AG04449 (cell line): ENCODE measurements at regions of chr22 and their contacts with region 1.

Region 1: DNA sequence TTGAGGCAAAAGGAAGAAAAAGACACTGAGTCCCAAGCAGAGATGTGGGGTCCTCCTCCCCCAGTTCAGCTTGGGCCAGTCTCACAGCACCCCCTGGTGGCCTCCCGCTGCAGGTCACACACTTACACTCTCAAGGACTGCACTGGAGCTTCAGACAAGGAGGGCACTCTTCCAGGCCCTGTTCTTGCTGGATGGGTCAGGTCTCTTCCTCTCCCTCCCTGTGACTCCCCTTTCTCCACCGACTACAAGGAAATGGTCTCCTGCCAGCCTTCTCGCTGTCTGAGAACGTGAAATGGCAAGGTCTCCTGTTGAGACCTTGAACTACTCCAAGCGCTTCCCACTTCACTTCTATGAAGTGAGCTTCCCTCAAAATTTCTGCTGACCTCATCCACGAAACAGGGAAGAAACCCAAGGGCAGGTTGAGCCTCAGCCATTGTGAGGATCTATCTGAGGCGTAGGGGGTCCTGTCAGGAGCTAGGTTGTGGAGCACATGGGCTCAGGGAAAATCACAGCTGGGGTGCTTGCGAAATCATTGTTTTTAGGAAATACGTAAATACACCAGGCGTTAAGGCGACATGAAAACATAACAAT is 11.2 kb upstream of the IGLL1 start:
- DNase-seq: no peak
- H3K4me3 ChIP-seq: no peak overlapping the region
- CTCF ChIP-seq: peak; percentile 92

Region 2: GRCh38 chr22:23539135-23539838 is 52.0 kb before region 1 on chr22:
- CTCF ChIA-PET with region 1: interaction called, 15 read pairs
- POLR2A ChIA-PET with region 1: no interaction called
- DNase-seq: peak; percentile 10
- H3K4me3 ChIP-seq: peak overlapping the region; percentile 27
- CTCF ChIP-seq: peak; percentile 79

Region 3: DNA sequence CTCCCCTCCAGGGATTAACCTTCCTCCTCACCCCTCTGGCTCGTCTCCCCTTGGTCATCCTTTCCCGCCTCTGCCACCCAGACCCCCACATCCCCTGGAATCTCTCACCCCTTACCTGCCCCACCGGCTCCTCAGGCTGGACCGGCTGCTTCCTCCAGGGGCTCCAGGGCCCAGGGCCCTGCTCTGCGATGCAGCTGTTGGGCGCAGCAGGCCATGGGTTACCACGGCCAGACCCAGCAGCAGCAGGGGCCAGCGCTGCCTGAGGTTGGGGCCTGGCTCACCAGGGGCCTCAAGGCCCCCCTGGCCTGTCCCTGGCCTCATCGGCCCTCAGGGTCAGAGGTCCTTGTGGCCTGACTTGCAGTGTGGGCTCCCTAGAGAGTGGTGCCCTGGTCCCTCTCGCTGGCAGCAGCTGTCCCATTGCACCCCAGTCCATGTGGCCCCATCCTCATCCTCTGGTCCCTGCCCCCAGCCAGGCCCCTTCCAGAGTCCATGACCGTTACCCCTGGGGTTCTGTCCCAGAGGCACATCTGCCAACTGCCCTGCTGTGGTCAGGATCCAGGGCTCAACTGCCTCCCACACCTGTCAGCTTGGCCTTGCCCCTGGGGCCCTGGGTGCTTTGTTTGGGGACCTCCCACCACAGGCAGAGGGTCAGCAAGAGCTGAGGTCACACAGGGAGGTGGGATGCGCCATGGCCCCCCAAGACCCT is 11.3 kb before region 1 on chr22 and contains the start of gene IGLL1:
- CTCF ChIA-PET with region 1: interaction called, 17 read pairs
- POLR2A ChIA-PET with region 1: no interaction called
- DNase-seq: no peak
- H3K4me3 ChIP-seq: no peak within 1 kb of the TSS
- CTCF ChIP-seq: no peak

Region 4: GRCh38 chr22:23604939-23605712 is 13.8 kb after region 1 on chr22:
- CTCF ChIA-PET with region 1: interaction called, 14 read pairs
- POLR2A ChIA-PET with region 1: no interaction called
- DNase-seq: no peak
- H3K4me3 ChIP-seq: no peak overlapping the region
- CTCF ChIP-seq: no peak